A549 (cell line): ENCODE measurements at regions of chr5 and their contacts with region 1.

Region 1: GRCh38 chr5:31213705-31214121 is 20.2 kb downstream of the CDH6 start:
- DNase-seq: no peak
- ATAC-seq: no peak
- H3K4me3 ChIP-seq: no peak overlapping the region
- H3K27ac ChIP-seq: no peak overlapping the region
- H3K4me1 ChIP-seq: no peaks in the 10 kb centered on the region
- CTCF ChIP-seq: no peak
- EP300 ChIP-seq: no peak
- POLR2A ChIP-seq: no peak
- RAD21 ChIP-seq: no peak

Region 2: DNA sequence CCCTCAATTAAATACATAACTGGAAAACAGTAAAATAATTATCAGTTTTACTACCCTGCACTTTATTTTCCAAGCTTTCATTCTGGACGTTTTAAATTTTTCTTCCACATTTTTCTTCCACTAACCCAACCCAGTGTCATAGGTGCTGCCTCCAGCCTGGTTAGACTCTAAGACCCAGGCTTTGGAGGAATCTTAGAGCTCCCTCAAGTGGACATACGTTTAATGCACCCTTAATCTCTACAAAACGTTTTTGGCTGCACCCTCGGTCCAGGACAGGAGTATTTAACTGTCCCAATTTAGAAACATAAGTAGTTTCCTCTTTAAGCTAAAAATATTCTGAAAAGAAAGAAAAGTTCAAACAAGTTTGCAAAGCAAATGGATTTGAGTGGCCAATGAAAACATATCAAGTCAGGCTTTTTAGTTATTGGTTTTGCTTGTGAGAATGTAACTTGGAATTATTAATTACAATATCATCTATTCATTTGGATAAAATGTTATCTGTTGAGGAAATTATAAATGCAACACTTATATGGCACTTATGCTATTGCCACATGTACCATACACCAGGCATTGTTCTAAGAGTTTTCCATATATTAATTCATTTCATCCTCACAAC is 18.7 kb after region 1 on chr5:
- CTCF ChIA-PET with region 1: interaction called, 11 read pairs
- POLR2A ChIA-PET with region 1: no interaction called
- DNase-seq: peak; percentile 49 to 56
- ATAC-seq: peak; percentile 73 to 90; a peak in 5 of 6 replicates
- H3K4me3 ChIP-seq: no peak overlapping the region
- H3K27ac ChIP-seq: no peak overlapping the region
- H3K4me1 ChIP-seq: no peaks in the 10 kb centered on the region
- CTCF ChIP-seq: peak; percentile 69
- EP300 ChIP-seq: no peak
- POLR2A ChIP-seq: no peak
- RAD21 ChIP-seq: peak; percentile 68 to 74; a peak in 4 of 5 replicates